Mammary epithelial cell (primary cell): ENCODE measurements at regions of chr1 and their contacts with region 1.

Region 1: DNA sequence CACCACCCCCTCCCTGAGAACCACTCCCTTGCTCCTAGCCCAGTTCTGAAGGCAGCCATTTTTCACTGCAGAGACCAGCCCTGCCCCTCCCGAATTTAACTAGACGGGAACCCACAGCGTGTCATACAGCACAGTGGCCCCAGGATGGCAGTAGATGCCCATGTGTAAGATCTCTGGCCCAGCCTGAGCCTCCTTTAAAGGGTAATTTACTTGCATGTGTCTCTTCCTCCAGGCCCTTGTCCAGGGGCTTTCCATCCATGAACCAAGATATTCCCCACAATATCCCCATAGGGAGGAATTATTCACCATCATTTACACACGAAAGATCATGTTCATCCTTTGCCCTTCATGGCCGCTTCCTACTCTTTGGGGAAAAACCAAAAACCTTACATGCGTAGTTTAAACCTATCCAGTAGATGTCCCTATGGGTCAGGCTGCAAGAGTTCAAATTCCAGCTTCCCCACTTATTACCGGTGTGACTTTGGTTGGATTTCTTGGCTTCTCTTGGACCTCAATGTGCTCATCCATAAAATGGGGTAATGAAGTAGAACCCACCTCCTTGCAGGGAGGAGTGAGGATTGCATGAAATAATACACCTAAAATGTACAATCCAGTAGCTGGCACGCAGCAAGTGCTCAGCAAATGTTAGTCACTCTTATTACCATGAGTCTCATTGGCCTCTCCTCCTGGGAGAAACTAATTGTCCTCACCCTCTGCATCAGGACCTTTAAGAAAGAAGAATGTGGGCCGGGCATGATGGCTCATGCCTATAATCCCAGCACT is 4.0 kb upstream of the LACTBL1 start:
- DNase-seq: peak; percentile 79
- H3K4me3 ChIP-seq: no peak overlapping the region
- H3K27ac ChIP-seq: no peak overlapping the region
- H3K4me1 ChIP-seq: peaks cover 17% of the 10 kb centered on the region
- H3K27me3 ChIP-seq: no peaks in the 10 kb centered on the region
- CTCF ChIP-seq: peak; percentile 90 to 91

Region 2: GRCh38 chr1:23019094-23019862 is 42.6 kb after region 1 on chr1 and contains the start of gene KDM1A:
- CTCF ChIA-PET with region 1: no interaction called
- dilution Hi-C with region 1: no loop called
- in situ Hi-C with region 1: no loop called
- intact Hi-C with region 1: loop called (anchors 1 kb)
- DNase-seq: peak; percentile 97
- H3K4me3 ChIP-seq: peak within 1 kb of the TSS; percentile 81 to 99 (median 86)
- H3K27ac ChIP-seq: peak within 1 kb of the TSS; percentile 91
- H3K4me1 ChIP-seq: no peaks in the 10 kb centered on the region
- H3K27me3 ChIP-seq: no peaks in the 10 kb centered on the region
- CTCF ChIP-seq: peak; percentile 19 to 25
- total RNA-seq, gene KDM1A: 65.1 to 65.8 TPM

Region 3: GRCh38 chr1:23184212-23184934 is 207.7 kb after region 1 on chr1:
- CTCF ChIA-PET with region 1: no interaction called
- dilution Hi-C with region 1: loop called (anchors 5 kb)
- in situ Hi-C with region 1: loop called (anchors 5 to 10 kb)
- intact Hi-C with region 1: loop called (anchors 1 kb)
- DNase-seq: no peak
- H3K4me3 ChIP-seq: no peak overlapping the region
- H3K27ac ChIP-seq: no peak overlapping the region
- H3K4me1 ChIP-seq: peaks cover 19% of the 10 kb centered on the region
- H3K27me3 ChIP-seq: no peaks in the 10 kb centered on the region
- CTCF ChIP-seq: peak; percentile 48 to 75

Region 4: DNA sequence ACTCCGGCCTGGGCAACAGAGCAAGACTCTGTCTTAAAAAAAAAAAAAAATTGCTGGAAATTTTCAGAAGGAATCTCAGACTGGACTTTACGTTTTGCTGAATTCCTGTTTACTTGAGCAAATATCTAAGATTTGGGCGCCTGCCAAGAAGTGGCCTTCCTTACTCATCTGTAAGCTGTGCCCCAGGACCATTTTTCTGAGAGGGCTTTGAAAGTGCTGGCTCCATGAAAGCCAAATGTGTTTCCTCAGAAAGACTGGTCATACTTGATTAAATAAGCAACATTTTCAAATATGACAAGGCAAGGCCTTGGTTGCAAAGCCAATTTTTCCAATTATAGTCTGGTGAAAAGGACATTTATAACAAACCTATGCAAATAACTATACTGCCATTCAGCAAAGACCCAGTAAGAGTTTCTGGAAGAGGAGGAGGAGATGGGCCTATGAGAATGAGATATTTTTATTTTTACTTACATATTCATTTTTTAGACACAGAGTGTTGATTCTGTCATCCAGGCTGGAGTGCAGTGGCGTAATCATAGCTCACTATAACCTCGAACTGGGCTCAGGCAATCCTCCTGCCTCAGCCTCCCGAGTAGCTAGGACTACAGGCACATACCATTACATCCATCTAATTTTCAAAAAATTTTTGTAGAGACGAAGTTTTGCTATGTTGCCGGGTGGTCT is 296.9 kb after region 1 on chr1:
- CTCF ChIA-PET with region 1: no interaction called
- dilution Hi-C with region 1: no loop called
- in situ Hi-C with region 1: loop called in 1 of 2 experiments (anchors 10 kb)
- intact Hi-C with region 1: loop called (anchors 2 kb)
- DNase-seq: peak; percentile 36
- H3K4me3 ChIP-seq: no peak overlapping the region
- H3K27ac ChIP-seq: no peak overlapping the region
- H3K4me1 ChIP-seq: peaks cover 4% of the 10 kb centered on the region
- H3K27me3 ChIP-seq: no peaks in the 10 kb centered on the region
- CTCF ChIP-seq: no peak

Region 5: GRCh38 chr1:23496490-23497181 is 520.0 kb after region 1 on chr1:
- CTCF ChIA-PET with region 1: no interaction called
- dilution Hi-C with region 1: no loop called
- in situ Hi-C with region 1: no loop called
- intact Hi-C with region 1: loop called (anchors 1 kb)
- DNase-seq: no peak
- H3K4me3 ChIP-seq: no peak overlapping the region
- H3K27ac ChIP-seq: no peak overlapping the region
- H3K4me1 ChIP-seq: no peaks in the 10 kb centered on the region
- H3K27me3 ChIP-seq: no peaks in the 10 kb centered on the region
- CTCF ChIP-seq: no peak

Region 6: DNA sequence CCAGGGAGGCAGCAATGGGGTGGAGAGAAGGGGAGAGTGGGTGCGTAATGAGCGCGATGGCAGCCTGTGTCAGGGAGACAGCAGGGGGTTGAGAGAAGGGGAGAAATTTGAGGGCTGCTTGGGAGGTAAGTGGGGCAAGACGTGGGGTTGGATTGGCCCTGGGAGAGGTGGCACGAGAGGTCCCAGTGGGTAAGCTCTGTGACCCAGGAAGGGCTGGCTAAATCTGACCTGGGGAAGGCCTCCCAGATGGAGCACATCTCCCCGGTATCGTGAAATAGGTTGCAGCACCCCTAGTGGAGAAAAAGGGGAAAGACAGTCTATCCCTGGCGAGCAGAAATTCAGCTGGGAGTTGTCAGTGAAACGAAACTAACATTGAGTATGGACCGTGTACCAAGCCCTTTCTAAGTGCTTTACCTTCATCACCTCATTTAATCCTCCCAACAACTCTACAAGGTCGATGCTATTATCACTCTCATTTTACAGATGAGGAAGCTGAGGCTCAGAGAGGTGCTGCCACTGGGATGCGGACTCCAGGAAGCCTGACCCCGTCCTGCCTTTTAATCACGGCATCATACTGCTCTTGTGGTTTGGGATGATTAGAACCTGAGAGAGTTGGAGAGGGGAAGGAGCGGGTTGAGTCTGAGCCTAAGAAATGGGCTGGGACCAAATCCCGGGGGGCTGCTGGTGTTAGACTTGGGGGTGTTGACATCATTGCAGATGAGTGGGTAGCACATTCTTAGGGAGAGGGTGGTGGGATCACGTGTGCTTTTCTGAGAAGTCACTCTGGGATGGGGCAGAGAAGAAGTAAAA is 658.4 kb after region 1 on chr1:
- CTCF ChIA-PET with region 1: interaction called, 4 read pairs
- dilution Hi-C with region 1: no loop called
- in situ Hi-C with region 1: no loop called
- intact Hi-C with region 1: loop called (anchors 1 kb)
- DNase-seq: peak; percentile 62
- H3K4me3 ChIP-seq: peak overlapping the region; percentile 5 to 19 (median 13)
- H3K27ac ChIP-seq: no peak overlapping the region
- H3K4me1 ChIP-seq: no peaks in the 10 kb centered on the region
- H3K27me3 ChIP-seq: no peaks in the 10 kb centered on the region
- CTCF ChIP-seq: peak; percentile 87 to 95